MCF 10A (cell line): ENCODE measurements at regions of chr10 and their contacts with region 1.

Region 1: GRCh38 chr10:26860443-26861204 is at the start of gene ABI1:
- DNase-seq: peak; percentile 99
- H3K4me3 Mint-ChIP-seq: peak within 1 kb of the TSS; percentile 91
- H3K27ac Mint-ChIP-seq: peak within 1 kb of the TSS; percentile 95
- H3K4me1 Mint-ChIP-seq: peaks cover 12% of the 10 kb centered on the region
- H3K27me3 Mint-ChIP-seq: no peaks in the 10 kb centered on the region
- CTCF ChIP-seq: no peak
- total RNA-seq, gene ABI1: 43.0 and 53.0 TPM in 2 replicates

Region 2: DNA sequence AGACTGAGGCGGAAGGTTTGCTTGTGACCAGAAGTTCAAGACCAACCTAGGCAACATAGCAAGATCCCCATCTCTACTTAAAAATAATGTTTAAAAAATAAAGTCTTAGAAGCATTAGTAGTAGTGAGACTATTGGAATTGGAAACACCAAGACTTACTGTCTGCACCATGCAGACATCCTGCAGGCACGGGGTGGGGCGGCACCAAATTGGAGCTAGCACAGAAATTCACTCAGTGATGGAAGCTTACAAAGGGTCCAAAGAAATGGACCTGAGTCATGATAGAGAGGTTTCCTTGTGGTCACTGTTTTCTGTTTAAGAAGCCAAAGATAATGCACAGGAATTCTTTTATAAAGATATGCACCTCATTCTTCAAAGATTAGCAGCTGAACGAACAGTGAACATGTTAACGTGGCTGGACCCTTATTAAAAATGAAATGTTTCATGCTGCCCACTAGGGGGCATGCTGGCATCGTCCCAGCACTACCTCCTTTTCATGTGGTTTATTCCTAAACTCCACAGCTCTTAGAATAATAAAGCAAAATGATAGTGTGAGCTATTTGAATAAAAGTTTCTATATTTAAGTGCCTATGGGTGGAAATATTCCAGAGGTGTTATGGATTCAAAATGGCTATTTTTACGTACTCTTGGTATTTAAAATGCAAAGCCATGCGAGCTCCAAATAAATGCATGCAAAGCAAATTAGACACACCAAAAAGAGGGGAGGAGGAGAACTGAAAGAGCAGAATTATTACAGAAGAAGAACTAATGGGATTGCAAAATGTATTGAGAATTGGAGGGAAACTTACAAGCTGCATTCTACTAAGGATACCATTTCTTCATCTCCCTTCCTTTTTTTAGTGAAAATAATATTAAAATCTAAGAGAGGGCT is 134.5 kb before region 1 on chr10:
- CTCF ChIA-PET with region 1: interaction called, 6 read pairs
- POLR2A ChIA-PET with region 1: interaction called, 4 read pairs
- intact Hi-C with region 1: loop called (anchors 1 kb)
- DNase-seq: peak; percentile 63
- H3K4me3 Mint-ChIP-seq: no peak overlapping the region
- H3K27ac Mint-ChIP-seq: no peak overlapping the region
- H3K4me1 Mint-ChIP-seq: no peaks in the 10 kb centered on the region
- H3K27me3 Mint-ChIP-seq: no peaks in the 10 kb centered on the region
- CTCF ChIP-seq: peak; percentile 48

Region 3: DNA sequence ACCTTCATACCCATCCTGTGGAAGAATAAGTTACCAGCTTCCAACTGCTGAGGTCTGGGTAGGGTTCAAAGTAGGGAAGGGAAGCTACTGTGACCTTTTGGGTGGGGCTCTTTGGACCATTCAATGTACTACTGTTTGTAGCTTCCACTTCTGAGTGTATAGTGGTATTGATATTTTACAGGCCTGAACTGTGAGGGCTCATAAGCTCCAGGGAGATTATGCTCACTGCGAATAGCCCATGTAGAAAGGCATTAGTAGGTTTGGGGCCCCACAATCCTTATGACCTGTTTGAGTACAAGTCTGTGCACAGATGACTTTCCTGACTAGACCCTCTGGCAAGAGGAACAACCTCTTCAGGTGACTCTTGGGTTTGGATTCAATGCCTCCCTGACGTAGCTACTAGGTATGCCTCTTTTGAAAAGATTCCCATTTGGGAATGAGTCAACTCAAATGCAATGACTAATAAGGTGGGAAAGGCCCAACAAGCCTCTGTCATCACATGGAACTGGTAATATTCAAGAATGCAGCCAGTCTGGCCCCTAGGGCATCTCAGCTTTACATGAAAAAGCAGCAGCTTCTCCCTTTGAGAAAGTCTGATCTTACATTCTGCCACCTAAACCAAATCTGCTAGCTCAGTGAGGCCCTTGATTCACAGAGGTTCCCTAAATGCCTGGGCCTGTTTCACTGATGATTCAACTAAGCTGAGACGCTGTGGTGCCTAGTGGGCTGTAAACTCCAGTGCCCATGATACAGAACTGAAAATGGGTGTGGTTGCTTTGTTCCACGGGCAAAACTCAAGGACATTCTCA is 79.6 kb before region 1 on chr10:
- CTCF ChIA-PET with region 1: interaction called, 9 read pairs
- POLR2A ChIA-PET with region 1: interaction called, 23 read pairs
- intact Hi-C with region 1: loop called (anchors 1 kb)
- DNase-seq: peak; percentile 97
- H3K4me3 Mint-ChIP-seq: peak overlapping the region; percentile 40
- H3K27ac Mint-ChIP-seq: peak overlapping the region; percentile 88
- H3K4me1 Mint-ChIP-seq: peaks cover 39% of the 10 kb centered on the region
- H3K27me3 Mint-ChIP-seq: no peaks in the 10 kb centered on the region
- CTCF ChIP-seq: no peak